ENCODE measurements at regions of chr3 and their contacts with region 1.

Region 1: DNA sequence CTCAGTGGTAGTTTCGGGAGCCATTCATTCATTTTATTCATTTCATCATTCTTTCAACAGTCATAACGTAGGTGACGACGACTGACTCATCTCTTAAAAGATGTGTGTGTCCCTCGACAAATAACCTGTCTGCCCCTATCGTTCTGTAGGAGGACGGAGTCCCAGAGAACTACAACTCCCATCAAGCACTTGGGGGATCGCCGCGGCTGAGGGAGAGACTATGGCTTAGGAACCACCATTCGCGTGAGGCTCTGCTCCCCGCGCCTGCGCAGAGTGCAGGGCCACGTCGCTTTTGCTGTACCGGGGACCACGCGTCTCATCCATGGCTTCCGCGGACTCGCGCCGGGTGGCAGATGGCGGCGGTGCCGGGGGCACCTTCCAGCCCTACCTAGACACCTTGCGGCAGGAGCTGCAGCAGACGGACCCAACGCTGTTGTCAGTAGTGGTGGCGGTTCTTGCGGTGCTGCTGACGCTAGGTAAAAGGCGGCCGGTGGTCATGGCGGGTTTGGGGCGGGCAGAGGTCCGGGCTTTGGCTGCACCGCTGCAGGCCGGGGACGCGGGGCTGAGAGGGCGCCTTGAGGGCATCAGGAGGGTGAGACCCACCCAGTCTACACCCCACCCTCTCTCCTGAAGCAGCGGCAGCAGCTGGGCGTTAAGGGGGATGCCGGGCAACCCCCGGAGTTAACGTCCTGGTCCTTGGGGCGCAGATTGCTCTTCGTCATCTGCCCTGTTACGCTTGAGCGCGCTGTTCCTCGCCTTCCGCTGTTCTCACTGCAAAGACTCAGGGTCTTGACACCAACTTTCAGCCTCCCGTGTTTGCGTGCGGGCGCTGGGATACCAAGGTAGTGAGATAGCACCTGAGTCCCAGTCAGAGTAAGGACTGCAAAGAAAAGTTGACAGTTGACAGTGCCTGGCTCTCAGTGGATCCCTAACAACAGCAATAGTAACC is at the start of gene SRPRB:
- DNase-seq: peak; percentile 92 to 98 (median 95)
- ATAC-seq: peak; percentile 94
- H3K4me3 ChIP-seq: peak within 1 kb of the TSS; percentile 81 to 91
- H3K4me3 Mint-ChIP-seq: peak within 1 kb of the TSS; percentile 97
- H3K27ac ChIP-seq: peak within 1 kb of the TSS; percentile 77 to 81
- H3K27ac Mint-ChIP-seq: peak within 1 kb of the TSS; percentile 96
- H3K4me1 ChIP-seq: peaks cover 18% of the 10 kb centered on the region
- H3K4me1 Mint-ChIP-seq: peaks cover 37% of the 10 kb centered on the region
- H3K27me3 ChIP-seq: no peaks in the 10 kb centered on the region
- H3K27me3 Mint-ChIP-seq: peaks cover 4% of the 10 kb centered on the region
- CTCF ChIP-seq: no peak
- total RNA-seq, gene SRPRB: 25.7 to 30.1 TPM

Region 2: DNA sequence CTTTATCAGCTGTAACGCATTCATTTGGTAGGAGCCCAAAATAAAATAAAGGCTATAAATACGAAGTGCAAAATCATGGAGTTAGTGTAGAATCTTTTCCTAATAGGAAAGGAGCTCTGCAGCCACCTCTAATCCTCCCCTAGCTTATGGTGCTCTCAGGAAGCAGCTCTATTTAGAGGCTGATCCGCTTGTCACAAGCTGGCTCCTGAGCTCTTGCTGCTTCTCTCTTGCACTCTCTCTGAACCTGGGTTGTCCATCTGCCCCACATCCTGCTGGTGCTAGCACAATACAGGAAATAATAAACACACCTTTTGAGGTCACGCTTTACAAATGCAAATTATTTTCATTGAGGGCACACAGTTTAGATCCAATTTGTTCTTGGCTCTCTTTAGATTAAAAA is 443.3 kb before region 1 on chr3:
- CTCF ChIA-PET with region 1: no interaction called
- POLR2A ChIA-PET with region 1: no interaction called
- intact Hi-C with region 1: no loop called
- DNase-seq: no peak
- ATAC-seq: no peak
- H3K4me3 ChIP-seq: no peak overlapping the region
- H3K4me3 Mint-ChIP-seq: no peak overlapping the region
- H3K27ac ChIP-seq: no peak overlapping the region
- H3K27ac Mint-ChIP-seq: no peak overlapping the region
- H3K4me1 ChIP-seq: no peaks in the 10 kb centered on the region
- H3K4me1 Mint-ChIP-seq: no peaks in the 10 kb centered on the region
- H3K27me3 ChIP-seq: peaks cover 0 to 2% of the 10 kb centered on the region in 2 experiments
- H3K27me3 Mint-ChIP-seq: no peaks in the 10 kb centered on the region
- CTCF ChIP-seq: no peak

Region 3: DNA sequence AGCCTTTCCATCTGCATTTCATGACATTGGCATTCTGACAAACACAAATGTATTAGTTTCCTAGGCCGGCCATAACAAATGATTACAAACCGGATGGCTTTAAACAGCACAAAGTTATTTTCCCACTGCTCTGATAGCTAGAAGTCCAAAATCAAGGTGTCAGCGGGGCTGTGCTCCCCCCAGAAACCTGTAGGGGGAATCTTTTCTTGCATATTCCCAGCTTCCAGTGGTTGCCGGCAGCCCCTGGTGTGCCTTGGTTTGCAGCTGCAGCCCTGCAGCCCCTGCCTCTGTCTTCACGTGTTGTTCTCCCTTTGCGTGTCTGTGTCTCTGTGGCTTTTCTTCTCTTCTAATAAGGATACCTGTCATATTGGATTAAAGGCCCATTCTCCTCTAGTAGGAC is 311.3 kb before region 1 on chr3:
- CTCF ChIA-PET with region 1: no interaction called
- POLR2A ChIA-PET with region 1: no interaction called
- intact Hi-C with region 1: loop called (anchors 5 kb)
- DNase-seq: peak in 2 of 9 experiments; percentile 17 to 30
- ATAC-seq: no peak
- H3K4me3 ChIP-seq: no peak overlapping the region
- H3K4me3 Mint-ChIP-seq: no peak overlapping the region
- H3K27ac ChIP-seq: no peak overlapping the region
- H3K27ac Mint-ChIP-seq: peak overlapping the region; percentile 78
- H3K4me1 ChIP-seq: peaks cover 53% of the 10 kb centered on the region
- H3K4me1 Mint-ChIP-seq: peaks cover 65% of the 10 kb centered on the region
- H3K27me3 ChIP-seq: no peaks in the 10 kb centered on the region
- H3K27me3 Mint-ChIP-seq: no peaks in the 10 kb centered on the region
- CTCF ChIP-seq: no peak

Region 4: DNA sequence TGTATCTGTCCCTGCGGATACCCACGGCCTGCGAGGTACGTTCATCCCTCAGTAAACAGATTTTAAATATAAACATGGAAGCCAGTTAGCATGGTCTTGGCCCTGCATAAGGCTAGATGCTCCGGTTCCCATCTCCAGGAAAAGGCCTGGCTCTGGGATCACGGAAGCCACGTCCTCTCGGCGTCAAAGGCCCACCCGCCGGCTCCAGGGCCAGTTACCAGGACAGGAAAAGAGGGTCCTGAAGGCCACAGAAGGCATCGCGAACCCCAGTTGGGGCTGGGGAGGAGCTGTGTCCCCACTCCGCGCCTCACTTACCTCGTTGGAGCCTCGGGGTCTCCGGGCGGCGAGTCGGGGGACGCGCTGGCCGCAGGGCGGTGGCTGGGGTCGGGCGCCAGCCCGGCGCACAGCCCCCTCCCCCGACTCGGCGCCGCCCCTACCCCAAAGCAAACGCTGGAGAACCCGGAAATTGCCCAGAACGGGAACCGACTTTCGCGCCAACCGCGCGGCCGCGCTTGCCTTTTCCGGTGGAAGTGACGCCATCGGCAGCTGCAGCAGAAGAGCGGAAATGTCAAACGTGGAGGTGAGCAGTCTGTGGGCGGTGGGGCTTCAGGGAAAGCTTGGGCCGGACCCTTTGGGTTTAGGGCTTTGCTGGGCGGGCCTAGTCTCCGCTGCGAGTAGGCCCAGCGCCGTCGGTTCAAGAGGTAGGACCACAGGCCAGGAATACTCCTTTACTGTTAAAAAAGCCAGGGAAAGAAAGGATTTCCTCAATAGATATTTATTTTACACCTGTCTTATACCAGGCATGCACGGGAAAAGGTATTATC is 144.1 kb before region 1 on chr3 and contains the start of gene TOPBP1:
- CTCF ChIA-PET with region 1: interaction called, 4 read pairs
- POLR2A ChIA-PET with region 1: no interaction called
- intact Hi-C with region 1: loop called (anchors 1 to 2 kb)
- DNase-seq: peak; percentile 58 to 92 (median 87)
- ATAC-seq: peak; percentile 82
- H3K4me3 ChIP-seq: peak within 1 kb of the TSS; percentile 86 to 90
- H3K4me3 Mint-ChIP-seq: peak within 1 kb of the TSS; percentile 98
- H3K27ac ChIP-seq: peak within 1 kb of the TSS; percentile 83 to 85
- H3K27ac Mint-ChIP-seq: peak within 1 kb of the TSS; percentile 98
- H3K4me1 ChIP-seq: peaks cover 26% of the 10 kb centered on the region
- H3K4me1 Mint-ChIP-seq: peaks cover 45% of the 10 kb centered on the region
- H3K27me3 ChIP-seq: no peaks in the 10 kb centered on the region
- H3K27me3 Mint-ChIP-seq: no peaks in the 10 kb centered on the region
- CTCF ChIP-seq: no peak
- total RNA-seq, gene TOPBP1: 32.4 to 33.9 TPM

Region 5: GRCh38 chr3:134258761-134259347 is 453.1 kb after region 1 on chr3:
- CTCF ChIA-PET with region 1: no interaction called
- POLR2A ChIA-PET with region 1: no interaction called
- intact Hi-C with region 1: loop called in 1 of 2 experiments (anchors 5 kb)
- DNase-seq: no peak
- ATAC-seq: no peak
- H3K4me3 ChIP-seq: no peak overlapping the region
- H3K4me3 Mint-ChIP-seq: no peak overlapping the region
- H3K27ac ChIP-seq: no peak overlapping the region
- H3K27ac Mint-ChIP-seq: no peak overlapping the region
- H3K4me1 ChIP-seq: no peaks in the 10 kb centered on the region
- H3K4me1 Mint-ChIP-seq: peaks cover 10% of the 10 kb centered on the region
- H3K27me3 ChIP-seq: no peaks in the 10 kb centered on the region
- H3K27me3 Mint-ChIP-seq: peaks cover 2% of the 10 kb centered on the region
- CTCF ChIP-seq: no peak